Stomach (tissue), 19 donors: ENCODE measurements at regions of chr9 and their contacts with region 1.

Region 1: GRCh38 chr9:84397151-84397728 is 56.7 kb upstream of the SLC28A3 start:
- DNase-seq: peak; percentile 75 to 88
- H3K4me3 ChIP-seq: no peak overlapping the region
- H3K27ac ChIP-seq: no peak overlapping the region
- H3K4me1 ChIP-seq: peaks cover 0 to 5% (median 0%) of the 10 kb centered on the region in 4 donors
- H3K27me3 ChIP-seq: peaks cover 0 to 8% (median 0%) of the 10 kb centered on the region in 3 donors
- CTCF ChIP-seq: peak in 5 of 7 experiments; percentile 69 to 94 (median 92)
- EP300 ChIP-seq: no peak
- POLR2A ChIP-seq: no peak

Region 2: GRCh38 chr9:85610074-85610860 is 1213.0 kb after region 1 on chr9:
- intact Hi-C with region 1: loop called (anchors 10 kb)
- DNase-seq: peak in 1 of 2 donors; percentile 90
- H3K4me3 ChIP-seq: peak overlapping the region in 1 of 4 donors; percentile 23
- H3K27ac ChIP-seq: no peak overlapping the region
- H3K4me1 ChIP-seq: peaks cover 0 to 9% (median 7%) of the 10 kb centered on the region in 4 donors
- H3K27me3 ChIP-seq: no peaks in the 10 kb centered on the region
- CTCF ChIP-seq: peak in 5 of 7 experiments; percentile 56 to 71 (median 62)
- EP300 ChIP-seq: no peak
- POLR2A ChIP-seq: no peak